A549 (cell line): ENCODE measurements at regions of chr11 and their contacts with region 1.

Region 1: GRCh38 chr11:73177778-73178577 is 35.9 kb upstream of the FCHSD2 start:
- DNase-seq: peak; percentile 70 to 91
- ATAC-seq: peak; percentile 95 to 96
- H3K4me3 ChIP-seq: no peak overlapping the region
- H3K27ac ChIP-seq: no peak overlapping the region
- H3K4me1 ChIP-seq: no peaks in the 10 kb centered on the region
- CTCF ChIP-seq: peak; percentile 84
- EP300 ChIP-seq: no peak
- POLR2A ChIP-seq: no peak
- RAD21 ChIP-seq: peak; percentile 96 to 97

Region 2: DNA sequence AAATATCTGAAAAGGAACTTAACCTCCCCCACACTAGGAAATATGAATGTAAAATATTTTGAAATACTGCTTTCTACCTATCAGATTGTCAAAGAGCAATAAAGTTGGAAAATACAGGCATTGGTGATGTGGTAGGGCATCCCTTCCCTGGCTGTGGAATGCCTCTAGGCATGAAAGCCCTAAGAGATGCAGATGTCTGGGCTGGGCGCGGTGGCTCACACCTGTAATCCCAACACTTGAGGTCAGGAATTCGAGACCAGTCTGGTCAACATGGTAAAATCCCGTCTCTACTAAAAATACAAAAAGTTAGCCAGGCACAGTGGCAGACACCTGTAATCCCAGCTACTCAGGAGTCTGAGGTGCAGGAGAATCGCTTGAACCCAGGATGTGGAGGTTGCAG is 447.7 kb before region 1 on chr11:
- CTCF ChIA-PET with region 1: interaction called, 64 read pairs
- POLR2A ChIA-PET with region 1: no interaction called
- DNase-seq: no peak
- ATAC-seq: no peak
- H3K4me3 ChIP-seq: no peak overlapping the region
- H3K27ac ChIP-seq: no peak overlapping the region
- H3K4me1 ChIP-seq: no peaks in the 10 kb centered on the region; the same call in 2 of the 3 replicates
- CTCF ChIP-seq: no peak
- EP300 ChIP-seq: no peak
- POLR2A ChIP-seq: no peak
- RAD21 ChIP-seq: no peak

Region 3: DNA sequence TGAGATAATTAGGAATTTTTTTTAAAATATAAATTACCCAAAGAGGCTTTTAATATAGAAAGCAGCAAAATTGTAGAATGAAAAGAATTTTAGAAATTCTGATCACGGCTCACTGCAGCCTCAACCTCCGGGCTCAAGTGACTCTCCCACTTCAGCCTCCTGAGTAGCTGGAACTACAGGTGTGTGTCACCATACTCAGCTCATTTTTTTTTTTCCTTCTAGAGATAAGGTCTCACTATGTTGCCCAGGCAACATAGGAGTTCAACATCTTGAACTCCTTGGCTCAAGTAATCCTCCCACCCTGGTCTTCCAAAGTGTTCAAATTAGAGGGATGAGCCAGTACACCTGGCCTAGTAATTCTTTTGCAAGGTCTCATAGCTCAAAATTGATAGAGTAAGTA is 287.1 kb before region 1 on chr11:
- CTCF ChIA-PET with region 1: interaction called, 12 read pairs
- POLR2A ChIA-PET with region 1: no interaction called
- DNase-seq: no peak
- ATAC-seq: no peak
- H3K4me3 ChIP-seq: no peak overlapping the region
- H3K27ac ChIP-seq: no peak overlapping the region
- H3K4me1 ChIP-seq: no peaks in the 10 kb centered on the region
- CTCF ChIP-seq: no peak
- EP300 ChIP-seq: no peak
- POLR2A ChIP-seq: no peak
- RAD21 ChIP-seq: no peak

Region 4: DNA sequence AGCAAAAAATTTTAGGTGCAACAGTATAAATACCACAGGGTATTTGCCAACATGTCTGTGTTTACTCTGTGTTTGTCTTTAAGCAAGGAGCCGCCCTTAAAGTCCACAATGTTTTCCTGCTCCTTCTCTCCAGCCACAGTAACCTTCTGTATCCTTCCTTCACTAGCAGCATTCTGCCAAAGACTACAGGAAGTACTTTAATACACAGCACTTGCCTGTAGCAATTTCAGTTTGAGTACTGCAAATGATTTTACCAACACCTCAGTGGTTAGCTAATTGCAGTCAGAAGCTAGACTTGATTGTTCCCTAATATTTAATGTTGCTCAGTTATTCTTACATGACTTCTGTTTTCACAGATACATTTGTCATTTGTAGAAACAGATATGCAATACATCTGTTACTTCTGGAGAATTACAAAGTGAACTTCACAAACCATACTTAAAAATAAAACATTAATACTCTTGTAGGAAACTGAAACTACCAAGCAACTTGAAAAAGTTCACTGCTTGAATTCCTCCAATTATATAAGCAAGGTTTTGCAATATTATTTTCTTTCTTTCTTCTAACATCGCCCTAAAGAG is 105.0 kb before region 1 on chr11:
- CTCF ChIA-PET with region 1: no interaction called
- POLR2A ChIA-PET with region 1: no interaction called
- DNase-seq: peak; percentile 18 to 75
- ATAC-seq: peak; percentile 87 to 96
- H3K4me3 ChIP-seq: peak overlapping the region; percentile 12
- H3K27ac ChIP-seq: peak overlapping the region; percentile 67 to 70
- H3K4me1 ChIP-seq: peaks cover 37% of the 10 kb centered on the region
- CTCF ChIP-seq: no peak
- EP300 ChIP-seq: no peak
- POLR2A ChIP-seq: no peak
- RAD21 ChIP-seq: no peak

Region 5: DNA sequence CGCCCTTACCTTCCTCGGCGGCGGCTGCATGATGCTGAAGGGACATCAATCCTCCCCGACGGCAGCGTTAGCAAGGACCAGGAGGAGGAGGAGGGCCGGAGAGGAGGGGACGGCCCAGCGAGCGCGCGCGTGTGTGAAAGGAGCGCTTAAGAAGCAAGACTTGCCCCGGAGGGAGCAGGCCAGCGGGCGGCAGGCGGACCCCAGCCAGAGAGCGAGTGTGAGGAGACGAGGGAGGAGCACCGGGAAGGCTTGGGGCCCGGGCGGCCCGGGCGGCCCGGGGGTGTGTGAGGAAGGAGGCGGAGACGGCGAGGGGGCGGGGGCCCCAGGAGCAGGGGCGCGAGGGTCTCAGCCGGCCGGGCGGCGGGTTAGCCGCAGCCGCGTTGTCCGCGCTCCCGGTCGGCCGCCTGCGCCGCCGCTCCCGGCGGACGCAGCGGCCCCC is 36.1 kb before region 1 on chr11:
- CTCF ChIA-PET with region 1: interaction called, 25 read pairs
- POLR2A ChIA-PET with region 1: interaction called, 3 read pairs
- DNase-seq: peak; percentile 56 to 73
- ATAC-seq: peak; percentile 65 to 70
- H3K4me3 ChIP-seq: peak overlapping the region; percentile 97
- H3K27ac ChIP-seq: peak overlapping the region; percentile 92 to 96
- H3K4me1 ChIP-seq: peaks cover 16% of the 10 kb centered on the region
- CTCF ChIP-seq: no peak
- EP300 ChIP-seq: no peak
- POLR2A ChIP-seq: peak; percentile 52; the same call in 1 of the 2 replicates
- RAD21 ChIP-seq: no peak

Region 6: DNA sequence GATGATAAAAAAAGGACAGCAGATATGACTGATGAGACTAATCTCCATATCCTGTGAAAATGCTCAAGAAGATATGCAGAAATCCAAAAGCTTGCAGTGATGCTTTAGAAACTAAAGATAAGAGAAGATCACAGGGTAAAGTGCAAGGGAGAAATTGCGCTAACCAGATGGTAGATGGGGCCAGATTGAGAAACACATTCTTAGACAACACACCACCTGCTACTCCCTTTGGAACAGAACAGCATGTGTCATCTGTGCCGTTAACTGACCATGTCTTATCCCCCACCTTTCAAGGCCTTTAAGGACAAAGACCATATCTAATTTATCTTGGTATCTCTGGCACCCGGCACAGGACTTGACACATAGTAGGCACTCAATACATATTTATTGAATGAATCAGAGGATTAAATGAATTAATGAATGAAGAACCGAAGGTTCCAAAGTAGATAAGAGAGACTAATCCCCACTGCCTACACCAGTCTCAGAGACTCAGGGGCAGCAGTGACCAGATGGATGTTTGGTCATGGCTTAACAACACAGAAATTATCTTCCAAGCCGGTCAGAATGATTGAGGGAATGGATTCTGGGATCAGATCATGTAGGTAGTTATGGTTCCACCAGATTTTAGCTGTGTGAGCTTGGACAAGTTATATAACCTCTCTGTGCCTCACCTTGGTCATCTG is 27.8 kb after region 1 on chr11:
- CTCF ChIA-PET with region 1: interaction called, 13 read pairs
- POLR2A ChIA-PET with region 1: no interaction called
- DNase-seq: no peak
- ATAC-seq: peak; percentile 34 to 49; a peak in 3 of 6 replicates
- H3K4me3 ChIP-seq: no peak overlapping the region
- H3K27ac ChIP-seq: peak overlapping the region in 1 of 2 experiments; percentile 59; a peak in 2 of 6 replicates
- H3K4me1 ChIP-seq: peaks cover 27% of the 10 kb centered on the region
- CTCF ChIP-seq: no peak
- EP300 ChIP-seq: no peak
- POLR2A ChIP-seq: no peak
- RAD21 ChIP-seq: no peak

Region 7: GRCh38 chr11:73242251-73243079 is 64.5 kb after region 1 on chr11:
- CTCF ChIA-PET with region 1: interaction called, 80 read pairs
- POLR2A ChIA-PET with region 1: no interaction called
- DNase-seq: peak; percentile 76 to 90
- ATAC-seq: peak; percentile 86 to 93
- H3K4me3 ChIP-seq: no peak overlapping the region
- H3K27ac ChIP-seq: peak overlapping the region; percentile 69 to 92
- H3K4me1 ChIP-seq: peaks cover 22% of the 10 kb centered on the region; the same call in 2 of the 3 replicates
- CTCF ChIP-seq: peak; percentile 94
- EP300 ChIP-seq: no peak
- POLR2A ChIP-seq: no peak
- RAD21 ChIP-seq: peak; percentile 92 to 93